SK-N-SH (cell line): ENCODE measurements at regions of chr15 and their contacts with region 1.

Region 1: GRCh38 chr15:41774062-41774881 is at the start of gene MAPKBP1:
- DNase-seq: peak; percentile 94
- H3K4me3 ChIP-seq: peak within 1 kb of the TSS; percentile 76 to 88
- H3K27ac ChIP-seq: peak within 1 kb of the TSS; percentile 87 to 89
- H3K4me1 ChIP-seq: peaks cover 23 to 29% of the 10 kb centered on the region in 2 experiments
- H3K27me3 ChIP-seq: no peaks in the 10 kb centered on the region
- CTCF ChIP-seq: peak; percentile 75
- EP300 ChIP-seq: peak; percentile 15 to 48; a peak in 2 of 4 replicates
- RAD21 ChIP-seq: peak; percentile 56
- polyA plus RNA-seq, gene MAPKBP1: 5.2 and 6.7 TPM in 2 replicates

Region 2: GRCh38 chr15:41756198-41756597 is 18.1 kb before region 1 on chr15:
- CTCF ChIA-PET with region 1: interaction called, 48 read pairs
- POLR2A ChIA-PET with region 1: interaction called, 5 read pairs
- DNase-seq: no peak
- H3K4me3 ChIP-seq: no peak overlapping the region
- H3K27ac ChIP-seq: no peak overlapping the region
- H3K4me1 ChIP-seq: no peaks in the 10 kb centered on the region; a peak in 1 of 4 replicates
- H3K27me3 ChIP-seq: no peaks in the 10 kb centered on the region
- CTCF ChIP-seq: no peak
- EP300 ChIP-seq: no peak
- RAD21 ChIP-seq: no peak

Region 3: DNA sequence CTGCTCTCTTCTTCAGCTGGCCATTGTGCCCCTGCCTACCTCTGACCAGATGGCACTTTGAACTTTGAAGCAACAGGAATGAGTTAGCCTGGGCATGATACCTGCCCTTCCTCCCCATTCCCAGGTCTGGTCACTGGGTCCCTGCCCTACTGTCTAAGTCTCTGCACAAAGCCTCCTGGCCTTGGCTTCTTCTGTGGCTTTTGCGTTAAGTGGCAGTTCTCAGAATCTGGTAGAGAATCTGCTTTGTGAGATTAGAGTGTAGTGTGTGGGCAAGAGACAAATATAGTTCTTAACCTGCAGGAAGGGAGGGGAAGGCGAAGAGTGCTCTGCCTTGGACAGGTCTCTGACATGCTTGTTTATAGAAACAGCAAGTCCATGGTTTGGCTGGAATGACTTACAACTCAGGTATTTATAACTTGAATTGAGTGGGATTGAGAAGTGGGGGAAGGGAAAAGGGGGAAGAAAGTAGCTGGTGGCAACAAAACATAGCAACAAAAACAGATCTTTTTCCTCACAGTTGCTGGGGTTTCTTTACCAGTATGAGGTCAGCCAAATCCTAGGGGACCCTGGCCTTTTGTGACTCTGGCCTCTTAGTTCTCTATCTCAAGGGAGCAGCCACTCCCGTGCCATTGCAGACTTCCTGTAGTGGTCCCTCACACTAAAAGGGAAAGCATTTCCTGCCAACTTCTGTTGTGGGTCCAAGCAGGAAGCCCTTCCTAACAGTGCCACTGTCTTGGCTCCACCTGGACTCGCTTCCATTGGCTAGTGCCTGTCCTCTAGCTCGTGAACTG is 16.7 kb after region 1 on chr15:
- CTCF ChIA-PET with region 1: interaction called, 13 read pairs
- POLR2A ChIA-PET with region 1: interaction called, 3 read pairs
- DNase-seq: no peak
- H3K4me3 ChIP-seq: no peak overlapping the region
- H3K27ac ChIP-seq: peak overlapping the region; percentile 51 to 82
- H3K4me1 ChIP-seq: peaks cover 16 to 36% of the 10 kb centered on the region in 2 experiments
- H3K27me3 ChIP-seq: no peaks in the 10 kb centered on the region
- CTCF ChIP-seq: no peak
- EP300 ChIP-seq: no peak
- RAD21 ChIP-seq: no peak

Region 4: GRCh38 chr15:41806291-41807181 is 32.3 kb after region 1 on chr15:
- CTCF ChIA-PET with region 1: interaction called, 114 read pairs
- POLR2A ChIA-PET with region 1: interaction called, 13 read pairs
- DNase-seq: no peak
- H3K4me3 ChIP-seq: no peak overlapping the region
- H3K27ac ChIP-seq: peak overlapping the region in 1 of 2 experiments; percentile 4; a peak in 1 of 4 replicates
- H3K4me1 ChIP-seq: peaks cover 0 to 28% of the 10 kb centered on the region in 2 experiments; a peak in 2 of 4 replicates
- H3K27me3 ChIP-seq: no peaks in the 10 kb centered on the region
- CTCF ChIP-seq: no peak
- EP300 ChIP-seq: no peak
- RAD21 ChIP-seq: peak; percentile 20; the same call in 1 of the 2 replicates

Region 5: DNA sequence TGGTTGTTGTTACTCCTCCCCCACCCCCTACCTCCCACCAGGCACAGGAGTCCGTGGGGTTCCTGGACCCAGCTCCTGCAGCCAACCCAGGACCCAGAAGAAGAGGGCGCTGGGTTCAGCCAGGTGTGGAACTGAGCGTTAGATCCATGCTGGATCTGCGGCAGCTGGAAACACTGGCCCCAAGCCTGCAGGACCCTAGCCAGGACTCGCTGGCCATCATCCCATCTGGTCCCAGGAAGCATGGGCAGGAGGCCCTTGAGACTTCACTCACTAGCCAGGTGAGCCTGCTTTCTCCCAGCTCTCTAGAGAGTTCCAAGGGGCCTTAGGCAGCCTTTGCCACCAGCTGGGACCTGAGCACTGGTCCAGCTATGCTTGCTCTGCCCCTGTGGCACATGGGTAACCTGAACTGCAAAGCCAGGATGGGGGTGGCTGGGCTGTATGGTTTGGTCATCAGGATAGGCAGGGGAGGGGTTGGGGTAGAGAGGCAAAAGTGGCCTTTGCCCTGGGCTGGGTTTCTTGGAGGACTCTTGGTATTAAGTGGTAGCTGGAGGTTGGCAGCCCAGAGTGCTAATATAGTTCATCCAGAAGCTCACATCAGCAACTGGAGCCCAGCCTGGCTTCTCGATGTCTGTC is 46.6 kb after region 1 on chr15:
- CTCF ChIA-PET with region 1: interaction called, 15 read pairs
- POLR2A ChIA-PET with region 1: no interaction called
- DNase-seq: no peak
- H3K4me3 ChIP-seq: no peak overlapping the region
- H3K27ac ChIP-seq: no peak overlapping the region
- H3K4me1 ChIP-seq: no peaks in the 10 kb centered on the region
- H3K27me3 ChIP-seq: no peaks in the 10 kb centered on the region
- CTCF ChIP-seq: no peak
- EP300 ChIP-seq: no peak
- RAD21 ChIP-seq: no peak

Region 6: DNA sequence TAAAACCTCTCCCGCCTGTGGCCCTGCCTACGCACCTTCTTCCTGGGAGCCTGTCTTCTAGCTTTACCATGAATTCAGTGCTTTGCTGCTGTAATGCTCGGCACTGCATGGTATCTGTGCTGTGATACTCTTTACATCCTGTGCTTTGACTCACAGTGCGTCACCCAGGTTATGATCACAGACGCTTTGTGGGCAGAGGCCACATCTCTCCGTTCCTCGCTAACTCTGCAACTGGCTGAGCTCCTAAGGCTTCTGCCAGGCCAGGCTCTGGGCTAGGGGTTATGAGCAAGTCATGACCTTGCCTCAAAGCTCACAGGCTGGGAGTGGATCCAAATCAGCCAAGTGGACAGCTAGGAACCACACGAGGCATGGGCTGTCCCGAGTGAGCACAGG is 96.4 kb after region 1 on chr15:
- CTCF ChIA-PET with region 1: no interaction called
- POLR2A ChIA-PET with region 1: no interaction called
- DNase-seq: no peak
- H3K4me3 ChIP-seq: no peak overlapping the region
- H3K27ac ChIP-seq: no peak overlapping the region
- H3K4me1 ChIP-seq: peaks cover 0 to 11% of the 10 kb centered on the region in 2 experiments; a peak in 1 of 4 replicates
- H3K27me3 ChIP-seq: no peaks in the 10 kb centered on the region
- CTCF ChIP-seq: no peak
- EP300 ChIP-seq: no peak
- RAD21 ChIP-seq: no peak